Ovary (tissue), 10 donors: ENCODE measurements at regions of chr19 and their contacts with region 1.

Region 1: DNA sequence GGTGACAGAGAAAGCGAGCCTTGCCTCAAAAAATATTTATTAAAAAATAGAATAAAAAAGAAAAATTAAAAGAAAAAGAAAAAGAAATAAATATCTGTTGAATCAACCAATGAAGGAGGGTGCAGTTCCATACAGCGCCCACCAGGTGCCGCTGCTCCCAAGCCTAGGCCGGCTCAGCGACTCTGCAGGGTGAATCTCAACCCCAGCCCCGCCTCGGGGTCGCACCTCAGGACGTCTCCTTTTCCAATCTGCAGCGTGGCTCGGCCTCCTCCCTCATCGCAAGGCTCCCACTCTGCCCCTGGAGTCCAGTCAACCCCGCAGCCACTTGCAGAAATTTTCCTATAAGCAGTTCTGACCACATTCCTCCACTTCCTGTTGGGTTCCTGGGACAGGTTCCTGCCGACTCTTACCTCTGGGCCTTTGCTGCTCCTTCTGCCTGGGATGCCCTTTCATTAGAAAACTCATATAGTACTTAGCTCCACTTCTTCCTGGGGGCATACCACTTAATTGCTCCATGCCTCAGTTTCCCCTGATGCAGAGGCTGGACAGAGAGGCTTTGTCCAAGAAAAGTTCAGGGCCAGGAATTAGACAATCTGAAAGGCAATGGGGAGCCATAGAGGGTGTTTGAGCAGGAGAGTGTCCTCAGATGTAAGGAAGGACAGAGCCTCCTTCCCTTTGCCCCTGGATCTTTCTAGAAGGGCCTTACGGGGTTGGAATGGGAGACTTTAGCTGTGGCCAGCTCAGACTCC is 24.3 kb downstream of the NFILZ start:
- DNase-seq: peak; percentile 22 to 65 (median 41)
- H3K4me3 ChIP-seq: no peak overlapping the region
- H3K27ac ChIP-seq: no peak overlapping the region
- H3K4me1 ChIP-seq: peaks cover 1% of the 10 kb centered on the region
- H3K27me3 ChIP-seq: no peaks in the 10 kb centered on the region
- CTCF ChIP-seq: peak; percentile 48 to 90 (median 70)
- EP300 ChIP-seq: no peak
- POLR2A ChIP-seq: no peak

Region 2: GRCh38 chr19:6887316-6887715 is 1767.4 kb before region 1 on chr19 and contains the start of gene ADGRE1:
- intact Hi-C with region 1: no loop called
- DNase-seq: no peak
- H3K4me3 ChIP-seq: no peak within 1 kb of the TSS
- H3K27ac ChIP-seq: no peak within 1 kb of the TSS
- H3K4me1 ChIP-seq: no peaks in the 10 kb centered on the region
- H3K27me3 ChIP-seq: no peaks in the 10 kb centered on the region
- CTCF ChIP-seq: no peak
- EP300 ChIP-seq: no peak
- POLR2A ChIP-seq: no peak
- total RNA-seq, gene ADGRE1: 0.12 to 0.79 (median 0.23) TPM in 6 of 7 donors, not detected in the other

Region 3: GRCh38 chr19:8444645-8445487 is 209.9 kb before region 1 on chr19 and contains the start of gene HNRNPM:
- intact Hi-C with region 1: no loop called
- DNase-seq: peak; percentile 99 to 100 (median 100)
- H3K4me3 ChIP-seq: peak within 1 kb of the TSS; percentile 95
- H3K27ac ChIP-seq: peak within 1 kb of the TSS; percentile 83 to 87
- H3K4me1 ChIP-seq: peaks cover 7% of the 10 kb centered on the region
- H3K27me3 ChIP-seq: no peaks in the 10 kb centered on the region
- CTCF ChIP-seq: peak in 1 of 3 donors; percentile 17
- EP300 ChIP-seq: no peak
- POLR2A ChIP-seq: peak; percentile 94
- total RNA-seq, gene HNRNPM: 88.2 to 220 (median 180) TPM

Region 4: DNA sequence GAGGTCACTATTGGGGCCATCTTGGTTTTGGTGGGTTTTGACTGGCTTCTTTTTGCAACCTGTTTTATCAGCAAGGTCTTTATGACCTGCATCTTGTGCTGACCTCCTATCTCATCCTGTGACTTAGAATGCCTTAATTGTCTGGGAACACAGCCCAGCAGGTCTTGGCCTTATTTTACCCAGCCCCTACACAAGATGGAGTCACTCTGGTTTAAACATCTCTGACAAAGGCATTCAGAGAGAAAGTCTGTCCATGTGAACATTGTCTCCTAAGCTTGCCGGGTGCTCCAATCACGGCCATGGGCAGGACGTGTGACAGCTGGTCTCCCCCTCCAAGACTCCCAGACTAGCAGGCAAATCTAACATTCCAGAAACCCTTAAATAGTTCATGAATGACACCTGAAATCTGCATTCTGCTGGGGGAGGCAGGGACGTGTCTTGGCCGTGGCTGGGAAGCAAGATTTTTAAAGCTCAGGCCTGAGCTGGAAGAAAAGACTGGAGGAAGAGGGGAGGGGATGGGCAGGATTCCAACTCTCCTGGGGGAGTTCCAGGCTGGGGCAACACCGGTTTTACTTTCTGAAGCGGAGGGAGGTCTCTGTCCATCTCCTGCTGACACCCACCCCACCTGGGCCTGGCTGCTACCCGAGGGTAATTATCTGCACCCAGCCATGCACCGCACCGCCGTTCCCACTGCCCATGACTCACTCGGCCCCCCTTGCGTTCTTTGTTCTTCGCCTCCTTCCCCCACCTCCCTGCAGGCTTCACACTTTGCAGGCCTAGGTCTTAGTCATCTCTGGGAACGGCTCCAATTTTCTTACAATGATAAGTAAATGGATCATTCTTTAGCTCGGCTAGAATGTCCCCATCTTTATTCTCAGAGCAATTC is 420.5 kb after region 1 on chr19:
- intact Hi-C with region 1: loop called (anchors 5 to 10 kb)
- DNase-seq: peak; percentile 75 to 83 (median 80)
- H3K4me3 ChIP-seq: no peak overlapping the region
- H3K27ac ChIP-seq: no peak overlapping the region
- H3K4me1 ChIP-seq: peaks cover 4% of the 10 kb centered on the region
- H3K27me3 ChIP-seq: no peaks in the 10 kb centered on the region
- CTCF ChIP-seq: no peak
- EP300 ChIP-seq: no peak
- POLR2A ChIP-seq: no peak

Region 5: GRCh38 chr19:9086761-9087160 is 432.0 kb after region 1 on chr19 and contains the start of gene OR1M1:
- intact Hi-C with region 1: loop called in 1 of 4 experiments (anchors 10 kb)
- DNase-seq: no peak
- H3K4me3 ChIP-seq: no peak within 1 kb of the TSS
- H3K27ac ChIP-seq: no peak within 1 kb of the TSS
- H3K4me1 ChIP-seq: no peaks in the 10 kb centered on the region
- H3K27me3 ChIP-seq: no peaks in the 10 kb centered on the region
- CTCF ChIP-seq: no peak
- EP300 ChIP-seq: no peak
- POLR2A ChIP-seq: no peak
- total RNA-seq, gene OR1M1: 0.34 TPM in 1 of 7 donors, not detected in the others